Activated CD4-positive, alpha-beta memory T cell treated with anti-CD3 and anti-CD28 coated beads for 36 hours (primary cell): ENCODE measurements at regions of chr17 and their contacts with region 1.

Region 1: GRCh38 chr17:41548844-41549595 is 20.9 kb upstream of the KRT19 start:
- DNase-seq: peak; percentile 91
- H3K4me3 Mint-ChIP-seq: no peak overlapping the region
- H3K27ac Mint-ChIP-seq: peak overlapping the region; percentile 70
- H3K4me1 Mint-ChIP-seq: peaks cover 21% of the 10 kb centered on the region
- H3K27me3 Mint-ChIP-seq: peaks cover 7% of the 10 kb centered on the region

Region 2: GRCh38 chr17:40803617-40804082 is 745.4 kb before region 1 on chr17:
- CTCF ChIA-PET with region 1: interaction called, 4 read pairs
- POLR2A ChIA-PET with region 1: no interaction called
- intact Hi-C with region 1: loop called (anchors 2 kb)
- DNase-seq: peak; percentile 86
- H3K4me3 Mint-ChIP-seq: no peak overlapping the region
- H3K27ac Mint-ChIP-seq: no peak overlapping the region
- H3K4me1 Mint-ChIP-seq: peaks cover 2% of the 10 kb centered on the region
- H3K27me3 Mint-ChIP-seq: peaks cover 36% of the 10 kb centered on the region

Region 3: GRCh38 chr17:40909351-40909750 is 639.7 kb before region 1 on chr17:
- CTCF ChIA-PET with region 1: interaction called, 23 read pairs
- POLR2A ChIA-PET with region 1: no interaction called
- intact Hi-C with region 1: loop called (anchors 1 kb)
- DNase-seq: peak; percentile 71
- H3K4me3 Mint-ChIP-seq: no peak overlapping the region
- H3K27ac Mint-ChIP-seq: no peak overlapping the region
- H3K4me1 Mint-ChIP-seq: no peaks in the 10 kb centered on the region
- H3K27me3 Mint-ChIP-seq: peaks cover 24% of the 10 kb centered on the region

Region 4: GRCh38 chr17:41363881-41364280 is 185.1 kb before region 1 on chr17:
- CTCF ChIA-PET with region 1: no interaction called
- POLR2A ChIA-PET with region 1: no interaction called
- intact Hi-C with region 1: no loop called
- DNase-seq: no peak
- H3K4me3 Mint-ChIP-seq: no peak overlapping the region
- H3K27ac Mint-ChIP-seq: no peak overlapping the region
- H3K4me1 Mint-ChIP-seq: peaks cover 5% of the 10 kb centered on the region
- H3K27me3 Mint-ChIP-seq: no peaks in the 10 kb centered on the region

Region 5: DNA sequence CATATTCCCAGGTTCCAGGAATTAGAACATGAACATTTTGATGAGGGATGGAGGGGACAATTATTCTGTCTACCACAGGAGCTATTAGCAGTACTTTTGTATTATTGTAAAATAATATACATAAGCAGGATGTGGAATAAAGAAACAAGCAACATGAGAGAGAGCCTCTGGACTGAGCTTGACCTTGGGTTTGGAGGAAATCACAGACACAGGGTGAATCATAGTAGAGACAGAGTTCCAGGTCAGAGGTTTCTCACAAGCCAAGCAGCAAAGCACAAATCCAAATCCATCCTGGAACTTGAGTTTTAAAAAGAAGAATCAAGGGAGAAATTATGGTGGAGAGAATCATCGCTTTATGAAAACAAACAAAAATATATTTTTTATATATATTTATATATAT is 156.7 kb before region 1 on chr17:
- CTCF ChIA-PET with region 1: no interaction called
- POLR2A ChIA-PET with region 1: no interaction called
- intact Hi-C with region 1: no loop called
- DNase-seq: no peak
- H3K4me3 Mint-ChIP-seq: no peak overlapping the region
- H3K27ac Mint-ChIP-seq: no peak overlapping the region
- H3K4me1 Mint-ChIP-seq: no peaks in the 10 kb centered on the region
- H3K27me3 Mint-ChIP-seq: peaks cover 7% of the 10 kb centered on the region

Region 6: GRCh38 chr17:41424111-41424635 is 124.8 kb before region 1 on chr17 and contains the start of gene KRT37:
- CTCF ChIA-PET with region 1: no interaction called
- POLR2A ChIA-PET with region 1: no interaction called
- intact Hi-C with region 1: no loop called
- DNase-seq: no peak
- H3K4me3 Mint-ChIP-seq: no peak within 1 kb of the TSS
- H3K27ac Mint-ChIP-seq: no peak within 1 kb of the TSS
- H3K4me1 Mint-ChIP-seq: peaks cover 3% of the 10 kb centered on the region
- H3K27me3 Mint-ChIP-seq: no peaks in the 10 kb centered on the region
- total RNA-seq, gene KRT37: not detected

Region 7: DNA sequence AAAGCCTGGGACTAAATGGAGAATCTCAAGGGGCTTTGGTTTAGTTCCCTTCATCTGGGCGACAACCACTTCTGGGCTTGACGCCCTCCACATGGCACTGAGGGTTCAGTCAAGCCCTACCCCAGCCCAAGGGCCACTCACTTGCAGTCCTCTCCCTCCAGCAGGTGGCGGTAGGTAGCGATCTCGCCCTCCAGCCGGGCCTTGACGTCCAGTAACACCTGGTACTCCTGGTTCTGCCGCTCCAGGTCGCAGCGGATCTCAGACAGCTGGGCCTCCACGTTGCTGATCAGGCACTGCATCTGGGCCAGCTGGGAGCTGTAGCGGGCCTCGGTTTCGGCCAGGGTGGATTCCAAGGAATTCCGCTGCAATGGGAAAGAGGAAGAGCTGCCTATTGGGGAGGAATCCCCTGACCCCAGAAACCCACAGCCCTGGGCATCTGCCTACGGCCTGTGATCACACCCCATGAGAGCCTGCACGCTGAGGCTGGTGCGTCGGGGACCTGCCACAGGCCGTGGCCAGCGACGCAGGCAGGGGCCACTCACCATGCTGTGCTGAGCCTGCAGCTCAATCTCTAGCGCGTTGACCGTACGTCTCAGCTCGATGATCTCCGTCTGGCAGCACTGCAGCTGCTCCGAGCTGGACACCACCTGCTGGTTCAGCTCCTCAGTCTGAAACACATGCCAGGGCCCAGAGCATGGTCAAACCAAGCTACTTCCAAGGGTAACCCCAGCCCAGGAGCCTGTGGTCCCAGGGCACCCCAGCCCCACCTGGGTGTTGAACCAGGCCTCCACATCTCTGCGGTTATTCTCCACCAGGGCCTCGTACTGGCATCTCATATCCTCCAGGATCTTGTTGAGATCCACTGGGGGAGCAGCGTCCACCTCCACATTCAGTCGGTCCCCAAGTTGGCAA is 62.0 kb before region 1 on chr17:
- CTCF ChIA-PET with region 1: interaction called, 41 read pairs
- POLR2A ChIA-PET with region 1: no interaction called
- intact Hi-C with region 1: no loop called
- DNase-seq: peak; percentile 60
- H3K4me3 Mint-ChIP-seq: no peak overlapping the region
- H3K27ac Mint-ChIP-seq: no peak overlapping the region
- H3K4me1 Mint-ChIP-seq: peaks cover 9% of the 10 kb centered on the region
- H3K27me3 Mint-ChIP-seq: no peaks in the 10 kb centered on the region

Region 8: GRCh38 chr17:41535764-41536481 is 13.1 kb before region 1 on chr17:
- CTCF ChIA-PET with region 1: interaction called, 26 read pairs
- POLR2A ChIA-PET with region 1: no interaction called
- intact Hi-C with region 1: no loop called
- DNase-seq: no peak
- H3K4me3 Mint-ChIP-seq: no peak overlapping the region
- H3K27ac Mint-ChIP-seq: no peak overlapping the region
- H3K4me1 Mint-ChIP-seq: no peaks in the 10 kb centered on the region
- H3K27me3 Mint-ChIP-seq: peaks cover 7% of the 10 kb centered on the region

Region 9: DNA sequence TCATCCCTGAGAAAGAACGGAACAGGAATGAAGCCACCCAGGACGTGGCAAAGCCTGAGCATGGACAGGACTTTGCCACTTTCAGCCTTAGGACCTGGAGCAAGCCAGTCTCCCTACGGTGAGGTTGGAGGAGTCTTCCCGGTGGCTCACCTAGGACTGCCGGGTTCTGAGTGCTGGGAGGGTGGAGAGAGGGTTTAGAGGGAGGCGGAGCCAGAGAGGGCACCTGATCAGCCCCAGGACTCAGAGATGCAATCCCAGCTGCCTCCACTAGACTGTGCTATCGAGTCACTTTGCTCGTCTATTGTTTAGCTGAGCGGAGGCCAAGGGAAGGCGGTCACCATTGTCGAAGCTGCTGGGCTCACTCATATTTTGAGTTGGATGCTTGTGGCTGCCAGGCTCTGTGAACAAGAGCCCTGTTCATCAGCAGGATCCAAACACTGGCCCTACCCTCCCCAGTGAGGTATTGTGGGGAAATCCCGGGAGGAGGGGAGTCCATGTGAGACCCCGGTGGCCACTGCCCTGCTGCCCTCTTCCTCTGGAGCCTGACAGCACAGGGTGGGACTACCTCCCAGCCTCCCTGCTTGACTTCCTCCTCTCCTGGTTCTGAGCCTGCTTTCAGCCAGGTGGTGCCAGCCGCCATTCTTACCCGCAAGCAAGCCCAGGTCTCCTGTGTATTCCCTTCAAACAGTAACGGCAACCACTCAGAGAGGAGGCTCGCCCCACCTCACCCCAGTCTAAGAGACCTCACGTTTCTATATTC is 30.6 kb after region 1 on chr17:
- CTCF ChIA-PET with region 1: interaction called, 15 read pairs
- POLR2A ChIA-PET with region 1: no interaction called
- intact Hi-C with region 1: loop called (anchors 1 kb)
- DNase-seq: peak; percentile 89
- H3K4me3 Mint-ChIP-seq: no peak overlapping the region
- H3K27ac Mint-ChIP-seq: no peak overlapping the region
- H3K4me1 Mint-ChIP-seq: no peaks in the 10 kb centered on the region
- H3K27me3 Mint-ChIP-seq: peaks cover 28% of the 10 kb centered on the region

Region 10: GRCh38 chr17:41627838-41628370 is 78.9 kb after region 1 on chr17:
- CTCF ChIA-PET with region 1: no interaction called
- POLR2A ChIA-PET with region 1: no interaction called
- intact Hi-C with region 1: no loop called
- DNase-seq: no peak
- H3K4me3 Mint-ChIP-seq: no peak overlapping the region
- H3K27ac Mint-ChIP-seq: no peak overlapping the region
- H3K4me1 Mint-ChIP-seq: no peaks in the 10 kb centered on the region
- H3K27me3 Mint-ChIP-seq: peaks cover 3% of the 10 kb centered on the region